ENCODE measurements at regions of chr3 and their contacts with region 1.

Region 1: DNA sequence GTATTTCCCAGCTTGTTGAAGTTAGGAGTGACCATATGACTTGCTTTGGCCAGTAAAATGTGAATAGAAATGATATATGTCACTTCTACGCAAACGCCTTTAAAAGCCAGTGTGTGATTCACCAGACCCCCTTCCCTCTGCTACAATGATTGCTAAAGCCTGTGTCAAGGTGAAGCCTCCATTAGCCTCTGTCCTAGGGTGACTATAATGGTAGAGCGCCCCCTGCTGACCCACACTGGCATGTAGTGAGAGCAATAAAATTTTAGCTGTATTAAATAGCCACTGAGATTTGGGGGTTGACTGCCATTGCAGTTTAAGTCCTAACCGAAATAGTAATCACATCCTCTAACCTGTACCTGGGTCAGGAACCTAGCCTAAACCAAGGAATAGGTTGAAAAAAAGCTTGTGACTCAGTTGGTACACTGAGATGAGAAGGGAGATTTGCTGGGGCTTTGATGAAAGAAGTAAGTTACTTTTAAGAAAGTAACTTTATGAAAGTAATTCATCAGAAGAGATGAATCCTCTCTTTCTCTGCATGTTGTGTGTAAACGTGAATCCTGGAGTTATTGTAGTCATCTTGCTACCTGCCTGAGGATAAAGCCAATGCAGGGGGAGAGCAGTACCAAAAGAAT is 52.6 kb downstream of the GTF2E1 start:
- DNase-seq: peak; percentile 42
- H3K4me3 ChIP-seq: no peak overlapping the region
- H3K27ac ChIP-seq: no peak overlapping the region
- H3K27me3 ChIP-seq: no peaks in the 10 kb centered on the region
- CTCF ChIP-seq: peak; percentile 83

Region 2: GRCh38 chr3:120567370-120568201 is 227.5 kb before region 1 on chr3:
- CTCF ChIA-PET with region 1: interaction called, 103 read pairs
- POLR2A ChIA-PET with region 1: no interaction called
- DNase-seq: no peak
- H3K4me3 ChIP-seq: peak overlapping the region; percentile 0; the same call in 1 of the 2 replicates
- H3K27ac ChIP-seq: no peak overlapping the region
- H3K27me3 ChIP-seq: no peaks in the 10 kb centered on the region
- CTCF ChIP-seq: peak; percentile 45

Region 3: DNA sequence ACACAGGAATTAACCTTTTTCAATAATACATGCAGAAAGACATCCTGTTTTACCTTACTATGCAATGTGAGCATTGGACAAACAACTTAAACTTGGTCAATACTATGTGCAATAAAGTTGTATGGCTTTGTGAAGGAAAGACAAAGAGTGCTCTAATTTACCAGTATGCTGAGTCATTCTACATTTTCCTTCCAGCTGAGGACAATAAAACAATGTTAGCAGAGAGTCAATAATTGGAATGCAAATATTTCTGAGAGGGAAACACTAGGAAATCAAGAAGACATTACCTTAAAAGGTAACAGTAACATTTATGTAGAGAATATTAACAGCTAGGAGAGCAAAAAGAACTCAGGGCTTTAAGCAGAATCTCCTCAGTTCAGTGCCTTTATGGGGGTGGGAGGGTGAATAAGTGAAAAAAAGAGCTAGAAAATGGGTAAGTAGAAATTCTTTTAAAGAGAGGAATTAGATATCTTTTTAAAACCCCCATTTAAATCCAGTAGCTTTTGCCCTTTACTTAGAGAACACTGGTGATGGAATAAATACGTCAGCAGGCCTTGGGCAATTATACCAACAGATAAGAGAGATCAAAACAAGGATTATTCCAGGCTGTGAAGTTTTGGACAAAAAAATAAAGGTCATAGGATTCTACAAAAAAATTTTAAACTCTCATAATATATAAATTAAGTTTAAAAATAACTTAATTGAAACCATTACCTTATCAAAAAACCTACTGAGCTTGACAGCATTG is 101.5 kb before region 1 on chr3:
- CTCF ChIA-PET with region 1: interaction called, 11 read pairs
- POLR2A ChIA-PET with region 1: no interaction called
- DNase-seq: peak; percentile 48
- H3K4me3 ChIP-seq: no peak overlapping the region
- H3K27ac ChIP-seq: peak overlapping the region; percentile 42
- H3K27me3 ChIP-seq: no peaks in the 10 kb centered on the region
- CTCF ChIP-seq: no peak

Region 4: DNA sequence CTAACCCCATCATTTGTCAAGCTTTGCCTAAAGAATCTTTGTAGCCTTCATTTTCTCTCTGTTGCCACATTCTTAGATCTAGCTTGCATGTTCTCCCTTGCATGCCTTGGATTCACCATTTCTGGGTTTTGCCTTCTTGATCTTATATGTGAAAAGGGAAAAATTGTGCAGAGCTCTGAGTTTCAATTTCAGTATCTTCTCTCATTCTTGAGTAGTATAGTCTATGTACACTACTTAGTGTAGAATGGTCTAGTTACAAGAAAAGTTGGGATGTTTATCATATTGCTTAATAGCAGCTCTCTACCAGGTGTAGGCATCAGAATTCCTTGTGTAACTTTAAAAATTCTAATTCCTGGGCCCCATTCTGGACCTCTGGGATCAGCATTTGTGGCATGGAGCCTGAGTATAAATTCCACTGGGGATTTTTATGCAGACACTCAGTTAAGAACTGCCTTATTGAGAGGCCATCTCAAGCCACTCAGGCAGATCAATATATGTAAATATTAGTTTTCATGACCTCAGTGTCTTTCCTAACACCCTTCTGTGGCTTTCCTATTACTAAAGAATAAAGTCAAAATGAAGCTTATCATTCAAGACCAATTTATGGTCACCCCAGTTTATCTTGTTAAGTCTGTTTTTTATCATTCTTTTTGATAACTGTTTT is 29.2 kb before region 1 on chr3:
- CTCF ChIA-PET with region 1: interaction called, 35 read pairs
- POLR2A ChIA-PET with region 1: no interaction called
- DNase-seq: no peak
- H3K4me3 ChIP-seq: no peak overlapping the region
- H3K27ac ChIP-seq: no peak overlapping the region
- H3K27me3 ChIP-seq: no peaks in the 10 kb centered on the region
- CTCF ChIP-seq: no peak

Region 5: GRCh38 chr3:120780977-120781376 is 14.2 kb before region 1 on chr3:
- CTCF ChIA-PET with region 1: interaction called, 41 read pairs
- POLR2A ChIA-PET with region 1: no interaction called
- DNase-seq: peak; percentile 44
- H3K4me3 ChIP-seq: no peak overlapping the region; the same call in 1 of the 2 replicates
- H3K27ac ChIP-seq: peak overlapping the region; percentile 54
- H3K27me3 ChIP-seq: no peaks in the 10 kb centered on the region
- CTCF ChIP-seq: no peak

Region 6: GRCh38 chr3:121111914-121112612 is 316.9 kb after region 1 on chr3:
- CTCF ChIA-PET with region 1: no interaction called
- POLR2A ChIA-PET with region 1: no interaction called
- DNase-seq: no peak
- H3K4me3 ChIP-seq: no peak overlapping the region
- H3K27ac ChIP-seq: no peak overlapping the region
- H3K27me3 ChIP-seq: no peaks in the 10 kb centered on the region
- CTCF ChIP-seq: no peak

Measured in AG04450 (cell line).